Activated CD4-positive, alpha-beta T cell treated with anti-CD3 and anti-CD28 coated beads for 36 hours (primary cell): ENCODE measurements at regions of chr1 and their contacts with region 1.

Region 1: GRCh38 chr1:71049951-71050598 is 2.5 kb upstream of the PTGER3 start:
- DNase-seq: no peak
- ATAC-seq: peak; percentile 59
- H3K4me3 Mint-ChIP-seq: no peak overlapping the region
- H3K27ac Mint-ChIP-seq: no peak overlapping the region
- H3K4me1 Mint-ChIP-seq: peaks cover 19% of the 10 kb centered on the region
- H3K27me3 Mint-ChIP-seq: peaks cover 30% of the 10 kb centered on the region

Region 2: DNA sequence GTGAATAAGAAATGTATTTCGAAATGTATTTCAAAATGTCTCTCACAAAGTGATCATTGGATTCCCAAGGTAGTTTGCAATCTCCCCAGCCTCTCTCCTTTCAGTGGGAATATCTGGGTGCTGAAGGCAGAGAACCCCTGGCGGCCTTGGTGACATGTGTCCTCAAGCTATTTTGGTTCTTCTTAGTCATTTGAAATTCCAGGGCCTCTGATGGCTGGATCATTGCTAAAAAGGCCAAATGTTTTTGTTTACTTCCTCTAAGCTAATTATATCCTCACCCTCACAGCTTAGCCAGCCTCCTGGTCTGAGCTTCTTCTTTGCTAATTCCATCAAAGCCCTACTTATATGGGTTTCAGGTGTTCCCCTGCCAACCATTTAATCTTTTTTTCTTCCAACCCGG is 915.9 kb before region 1 on chr1:
- CTCF ChIA-PET with region 1: no interaction called
- POLR2A ChIA-PET with region 1: no interaction called
- intact Hi-C with region 1: loop called in 1 of 2 experiments (anchors 5 kb)
- DNase-seq: no peak
- ATAC-seq: no peak
- H3K4me3 Mint-ChIP-seq: no peak overlapping the region
- H3K27ac Mint-ChIP-seq: no peak overlapping the region
- H3K4me1 Mint-ChIP-seq: no peaks in the 10 kb centered on the region
- H3K27me3 Mint-ChIP-seq: no peaks in the 10 kb centered on the region

Region 3: DNA sequence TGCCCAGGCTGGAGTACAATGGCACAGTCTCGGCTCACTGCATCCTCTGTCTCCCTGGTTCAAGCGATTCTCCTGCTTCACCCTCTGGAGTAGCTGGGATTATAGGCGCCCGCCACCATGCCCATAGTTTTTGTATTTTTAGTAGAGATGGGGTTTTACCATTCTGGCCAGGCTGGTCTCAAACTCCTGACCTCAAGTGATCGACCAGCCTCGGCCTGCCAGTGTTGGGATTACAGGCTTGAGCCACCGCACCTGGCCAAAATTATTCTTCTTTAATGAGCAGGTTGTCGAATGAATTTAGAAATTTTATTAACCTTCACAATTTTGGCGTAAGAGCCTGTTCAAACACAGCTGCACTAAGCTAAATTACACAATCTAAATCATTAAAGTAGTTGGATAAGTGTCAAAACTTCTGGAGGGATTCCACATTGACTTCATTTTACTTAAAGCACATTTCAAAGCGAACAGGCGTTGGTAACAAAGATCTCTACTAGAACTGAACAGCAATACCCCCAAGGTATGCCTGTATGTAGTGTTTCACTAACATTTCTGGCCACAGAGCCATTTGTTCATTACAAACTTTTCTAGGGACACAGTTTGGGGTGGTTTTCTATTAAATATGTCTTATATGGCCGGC is 644.2 kb before region 1 on chr1:
- CTCF ChIA-PET with region 1: no interaction called
- POLR2A ChIA-PET with region 1: no interaction called
- intact Hi-C with region 1: no loop called
- DNase-seq: no peak
- ATAC-seq: no peak
- H3K4me3 Mint-ChIP-seq: no peak overlapping the region
- H3K27ac Mint-ChIP-seq: no peak overlapping the region
- H3K4me1 Mint-ChIP-seq: peaks cover 6% of the 10 kb centered on the region
- H3K27me3 Mint-ChIP-seq: peaks cover 6% of the 10 kb centered on the region

Region 4: DNA sequence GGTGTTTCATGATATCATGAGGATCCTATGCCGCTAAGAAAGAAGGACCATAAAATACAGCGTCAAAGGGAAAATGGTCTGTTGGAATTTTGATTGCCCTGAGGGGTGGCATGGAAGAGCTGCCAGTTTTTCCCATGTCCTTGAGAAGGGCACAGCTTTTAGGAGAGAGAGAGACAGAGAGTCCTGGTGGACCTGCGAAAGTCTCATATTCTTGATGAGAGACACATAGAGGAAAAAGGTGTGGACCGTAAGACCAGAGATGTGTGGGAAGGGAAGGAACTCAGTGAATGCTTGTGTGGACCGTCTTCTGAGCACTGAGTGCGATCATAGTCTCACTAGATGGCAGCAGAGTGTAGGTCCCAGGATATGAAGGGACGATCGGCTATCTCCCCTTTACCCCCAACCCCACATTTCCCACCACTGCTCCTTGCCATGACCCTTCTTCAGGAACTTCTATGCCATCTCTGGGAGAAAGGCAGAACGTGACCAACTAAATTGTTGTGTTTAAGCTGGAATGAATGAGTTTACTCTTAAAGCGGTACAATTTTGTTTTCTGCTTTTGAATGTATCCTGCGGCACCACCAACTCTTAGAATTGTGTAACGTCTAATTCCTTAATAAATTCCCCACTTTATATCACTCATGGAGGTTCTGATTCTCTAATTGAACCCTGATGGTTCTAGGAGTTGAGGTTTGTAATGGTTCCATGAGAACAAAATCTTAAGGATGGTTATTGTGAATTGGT is 521.3 kb before region 1 on chr1:
- CTCF ChIA-PET with region 1: interaction called, 9 read pairs
- POLR2A ChIA-PET with region 1: no interaction called
- intact Hi-C with region 1: loop called (anchors 1 kb)
- DNase-seq: peak; percentile 29
- ATAC-seq: peak; percentile 51
- H3K4me3 Mint-ChIP-seq: no peak overlapping the region
- H3K27ac Mint-ChIP-seq: no peak overlapping the region
- H3K4me1 Mint-ChIP-seq: no peaks in the 10 kb centered on the region
- H3K27me3 Mint-ChIP-seq: peaks cover 17% of the 10 kb centered on the region

Region 5: DNA sequence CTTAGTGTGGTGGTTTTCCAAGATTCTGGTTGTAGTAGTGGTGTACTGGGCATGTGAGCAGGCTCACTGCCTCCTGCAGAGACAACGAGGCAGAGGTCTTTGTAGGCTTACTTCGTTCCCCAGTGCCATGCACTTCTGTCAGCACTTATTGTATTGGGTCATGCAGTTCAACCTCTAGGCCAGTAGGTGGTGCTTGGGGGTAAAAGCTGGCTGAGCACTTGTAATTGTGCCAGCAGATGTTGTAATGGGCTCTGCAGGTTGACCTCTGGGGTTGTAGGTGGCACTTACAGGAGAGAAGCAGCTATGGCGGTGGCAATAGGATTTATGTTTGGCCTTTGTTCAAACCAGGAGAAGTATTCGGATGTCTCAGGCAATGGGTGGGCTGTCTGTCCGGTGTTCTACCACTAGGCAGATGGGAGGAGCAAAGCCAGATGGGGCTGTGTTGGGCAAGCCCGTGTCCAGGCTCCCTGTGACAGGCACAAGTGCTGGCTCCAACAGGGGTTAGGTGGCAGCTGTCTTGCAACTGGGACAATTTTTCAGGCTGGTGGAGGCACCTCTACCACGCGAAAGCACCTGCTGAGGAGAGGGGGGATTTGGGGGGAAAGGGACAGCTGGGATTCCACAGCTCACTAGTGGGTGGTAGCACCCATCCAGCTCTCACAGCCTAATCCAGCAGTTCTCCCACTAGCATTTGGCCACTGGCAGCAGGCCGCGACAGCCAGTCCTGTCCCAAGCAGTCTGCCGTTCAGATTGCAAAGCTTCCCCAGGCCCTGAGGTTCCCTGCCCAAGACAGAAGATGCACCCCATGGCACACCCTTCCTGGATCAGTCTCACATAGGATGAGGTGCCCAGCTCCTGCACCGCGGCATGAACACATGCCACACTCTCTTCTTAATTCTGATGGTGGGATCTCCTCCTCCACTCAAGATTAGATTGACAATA is 364.5 kb before region 1 on chr1:
- CTCF ChIA-PET with region 1: interaction called, 14 read pairs
- POLR2A ChIA-PET with region 1: no interaction called
- intact Hi-C with region 1: loop called (anchors 1 kb)
- DNase-seq: peak; percentile 61
- ATAC-seq: peak; percentile 80
- H3K4me3 Mint-ChIP-seq: no peak overlapping the region
- H3K27ac Mint-ChIP-seq: no peak overlapping the region
- H3K4me1 Mint-ChIP-seq: no peaks in the 10 kb centered on the region
- H3K27me3 Mint-ChIP-seq: peaks cover 4% of the 10 kb centered on the region

Region 6: DNA sequence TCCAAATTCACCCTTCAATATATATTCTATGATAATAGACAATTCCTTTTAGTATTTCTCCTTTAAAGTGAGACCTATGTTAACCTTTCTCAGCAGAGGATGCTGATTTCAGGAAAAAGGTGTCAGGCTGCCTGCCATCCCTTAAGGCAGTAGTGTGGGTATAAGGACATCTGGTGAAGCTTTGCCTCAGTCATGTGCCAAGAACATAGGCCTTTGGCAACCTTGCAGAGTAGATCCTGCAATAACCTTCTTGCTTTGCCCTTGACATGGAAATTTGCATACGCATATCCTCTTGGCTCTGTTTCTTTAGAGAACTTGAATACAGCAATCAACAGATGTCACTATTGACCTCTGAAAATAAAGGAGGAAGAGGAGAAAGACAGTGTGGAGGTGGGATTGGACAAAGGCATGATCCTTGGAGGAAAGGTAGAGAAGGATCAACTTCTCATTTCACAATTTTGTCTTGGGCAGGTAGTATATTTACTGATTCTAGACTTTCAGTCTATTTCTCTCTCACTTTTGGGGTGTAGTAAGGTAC is 51.8 kb after region 1 on chr1:
- CTCF ChIA-PET with region 1: no interaction called
- POLR2A ChIA-PET with region 1: no interaction called
- intact Hi-C with region 1: loop called in 1 of 2 experiments (anchors 1 kb)
- DNase-seq: no peak
- ATAC-seq: no peak
- H3K4me3 Mint-ChIP-seq: no peak overlapping the region
- H3K27ac Mint-ChIP-seq: no peak overlapping the region
- H3K4me1 Mint-ChIP-seq: no peaks in the 10 kb centered on the region
- H3K27me3 Mint-ChIP-seq: peaks cover 14% of the 10 kb centered on the region

Region 7: DNA sequence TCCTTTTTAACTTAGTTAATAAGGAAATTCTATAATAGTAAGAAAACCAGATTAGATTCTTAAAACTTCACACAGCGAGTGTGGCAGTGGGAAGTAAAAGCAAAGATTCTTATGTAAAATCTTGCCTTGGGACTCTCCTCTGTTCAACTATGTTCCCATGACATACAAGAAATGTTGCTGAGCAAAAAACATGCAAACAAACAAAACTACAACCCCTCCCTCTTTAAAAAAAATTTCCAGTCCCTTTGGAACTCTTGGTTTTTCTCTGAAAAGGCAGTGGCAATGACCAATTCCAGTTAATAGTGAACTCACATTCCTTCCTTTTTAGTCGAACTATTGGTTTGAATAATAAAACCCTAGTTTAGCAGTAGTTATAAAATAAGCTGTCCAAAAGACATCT is 483.9 kb after region 1 on chr1:
- CTCF ChIA-PET with region 1: no interaction called
- POLR2A ChIA-PET with region 1: no interaction called
- intact Hi-C with region 1: no loop called
- DNase-seq: no peak
- ATAC-seq: no peak
- H3K4me3 Mint-ChIP-seq: no peak overlapping the region
- H3K27ac Mint-ChIP-seq: no peak overlapping the region
- H3K4me1 Mint-ChIP-seq: no peaks in the 10 kb centered on the region
- H3K27me3 Mint-ChIP-seq: no peaks in the 10 kb centered on the region